ENCODE measurements at regions of chr15 and their contacts with region 1.

Region 1: GRCh38 chr15:59247364-59247763 is 40.7 kb downstream of the LDHAL6B start:
- DNase-seq: peak in 5 of 10 donors; percentile 53 to 77 (median 58)
- H3K4me3 ChIP-seq: no peak overlapping the region
- H3K27ac ChIP-seq: peak overlapping the region in 23 of 59 donors; percentile 3 to 61 (median 33)
- H3K27me3 ChIP-seq: no peaks in the 10 kb centered on the region
- CTCF ChIP-seq: peak; percentile 37 to 81 (median 66)

Region 2: DNA sequence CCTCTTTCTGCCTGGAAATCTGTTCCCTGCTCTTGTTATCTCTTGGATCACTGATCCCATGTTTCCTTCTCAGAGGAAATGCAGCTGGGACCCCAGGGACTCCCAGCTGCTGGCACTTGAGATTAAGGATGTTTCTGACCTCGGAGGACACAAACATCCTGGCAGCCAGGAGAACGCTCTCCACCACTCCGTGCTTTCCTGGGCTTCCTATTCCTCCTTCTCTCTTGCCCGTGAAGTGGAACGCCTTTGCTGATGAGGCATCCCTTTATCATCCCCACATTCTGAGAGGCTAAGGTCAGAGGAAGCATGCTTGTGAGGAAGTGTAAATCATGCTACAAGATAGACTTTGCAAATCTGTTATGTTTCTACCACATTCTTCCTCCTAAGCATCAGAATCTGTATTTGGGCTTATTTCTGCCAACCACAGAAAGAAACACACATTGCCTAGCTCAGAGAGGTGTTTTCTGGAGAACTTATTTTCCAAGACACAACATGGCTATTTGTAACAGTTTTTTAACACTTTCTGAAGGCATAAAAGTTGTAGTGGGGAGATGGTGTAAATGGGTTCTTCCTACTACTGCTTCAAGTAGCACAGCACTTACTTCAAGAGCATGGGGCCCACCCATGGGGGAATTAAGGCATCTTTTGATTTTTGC is 66.3 kb before region 1 on chr15:
- intact Hi-C with region 1: loop called in 1 of 2 experiments (anchors 5 kb)
- DNase-seq: no peak
- H3K4me3 ChIP-seq: no peak overlapping the region
- H3K27ac ChIP-seq: peak overlapping the region in 6 of 59 donors; percentile 5 to 30 (median 16)
- H3K27me3 ChIP-seq: no peaks in the 10 kb centered on the region
- CTCF ChIP-seq: no peak

Region 3: GRCh38 chr15:59221511-59222505 is 25.6 kb before region 1 on chr15:
- intact Hi-C with region 1: no loop called
- DNase-seq: peak in 1 of 10 donors; percentile 29
- H3K4me3 ChIP-seq: no peak overlapping the region
- H3K27ac ChIP-seq: peak overlapping the region in 55 of 59 donors; percentile 11 to 83 (median 66)
- H3K27me3 ChIP-seq: no peaks in the 10 kb centered on the region
- CTCF ChIP-seq: no peak

Region 4: DNA sequence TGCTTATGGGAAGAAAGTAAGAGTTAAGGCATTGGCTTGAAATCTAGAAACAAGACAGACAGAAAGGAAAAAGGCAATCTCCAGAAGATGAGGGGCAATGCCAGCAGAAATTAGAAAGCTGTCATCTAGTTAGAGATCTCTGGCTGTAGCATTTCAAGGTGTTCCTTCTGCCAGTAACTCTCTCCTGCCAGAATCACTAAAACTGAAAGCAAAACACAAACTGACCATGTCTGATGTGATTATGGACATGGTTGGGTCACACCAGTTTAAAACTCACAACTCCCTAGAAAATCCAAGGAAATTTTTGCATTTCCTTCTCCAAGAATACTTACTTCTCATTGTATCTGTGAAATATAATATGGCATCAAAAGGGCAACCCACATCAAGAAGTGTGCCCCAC is 42.2 kb after region 1 on chr15:
- intact Hi-C with region 1: loop called in 1 of 2 experiments (anchors 2 kb)
- DNase-seq: no peak
- H3K4me3 ChIP-seq: peak overlapping the region in 1 of 59 donors; percentile 5
- H3K27ac ChIP-seq: peak overlapping the region in 58 of 59 donors; percentile 11 to 99 (median 91)
- H3K27me3 ChIP-seq: no peaks in the 10 kb centered on the region
- CTCF ChIP-seq: no peak

Region 5: DNA sequence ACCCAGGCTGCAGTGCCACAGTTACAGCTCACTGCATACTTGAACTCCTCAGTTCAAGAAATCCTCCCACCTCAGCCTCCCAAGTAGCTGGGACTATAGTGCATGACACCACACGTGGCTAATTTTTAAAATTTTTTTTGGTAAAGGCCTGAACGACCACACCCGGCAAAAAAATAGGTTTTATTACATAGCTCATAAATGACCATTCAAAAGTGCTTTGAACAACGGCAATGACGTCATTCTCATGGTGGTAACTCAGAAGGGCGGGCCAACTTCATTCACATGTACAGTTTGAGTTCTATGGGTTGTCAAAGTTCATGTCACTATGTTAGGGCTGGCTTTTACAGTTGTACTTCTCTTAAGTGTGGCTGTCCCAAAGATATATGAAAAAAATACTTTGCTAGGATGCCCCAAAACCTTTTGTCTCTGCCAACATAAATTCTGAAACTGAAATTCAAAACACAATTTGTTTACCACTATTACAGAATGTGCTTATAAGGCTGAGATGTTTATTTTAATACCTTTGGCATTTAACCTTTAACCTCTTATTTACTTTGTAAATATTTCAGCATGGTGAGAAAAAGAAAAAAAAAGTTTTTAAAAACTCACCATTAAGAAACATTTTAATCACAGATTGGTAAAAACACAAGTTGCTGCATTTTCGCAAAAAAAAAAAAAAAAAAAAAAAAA is 119.1 kb after region 1 on chr15:
- intact Hi-C with region 1: loop called in 1 of 2 experiments (anchors 2 kb)
- DNase-seq: no peak
- H3K4me3 ChIP-seq: peak overlapping the region in 2 of 59 donors; percentile 21 to 31
- H3K27ac ChIP-seq: peak overlapping the region in 17 of 59 donors; percentile 5 to 79 (median 61)
- H3K27me3 ChIP-seq: no peaks in the 10 kb centered on the region
- CTCF ChIP-seq: no peak